Endothelial cell of umbilical vein (primary cell): ENCODE measurements at regions of chr2 and their contacts with region 1.

Region 1: GRCh38 chr2:65040400-65041261 is 15.6 kb upstream of the CEP68 start:
- DNase-seq: peak; percentile 83
- H3K4me3 ChIP-seq: no peak overlapping the region
- H3K27ac ChIP-seq: no peak overlapping the region
- H3K4me1 ChIP-seq: peaks cover 11% of the 10 kb centered on the region
- H3K27me3 ChIP-seq: no peaks in the 10 kb centered on the region
- CTCF ChIP-seq: peak; percentile 82 to 91
- POLR2A ChIP-seq: no peak

Region 2: DNA sequence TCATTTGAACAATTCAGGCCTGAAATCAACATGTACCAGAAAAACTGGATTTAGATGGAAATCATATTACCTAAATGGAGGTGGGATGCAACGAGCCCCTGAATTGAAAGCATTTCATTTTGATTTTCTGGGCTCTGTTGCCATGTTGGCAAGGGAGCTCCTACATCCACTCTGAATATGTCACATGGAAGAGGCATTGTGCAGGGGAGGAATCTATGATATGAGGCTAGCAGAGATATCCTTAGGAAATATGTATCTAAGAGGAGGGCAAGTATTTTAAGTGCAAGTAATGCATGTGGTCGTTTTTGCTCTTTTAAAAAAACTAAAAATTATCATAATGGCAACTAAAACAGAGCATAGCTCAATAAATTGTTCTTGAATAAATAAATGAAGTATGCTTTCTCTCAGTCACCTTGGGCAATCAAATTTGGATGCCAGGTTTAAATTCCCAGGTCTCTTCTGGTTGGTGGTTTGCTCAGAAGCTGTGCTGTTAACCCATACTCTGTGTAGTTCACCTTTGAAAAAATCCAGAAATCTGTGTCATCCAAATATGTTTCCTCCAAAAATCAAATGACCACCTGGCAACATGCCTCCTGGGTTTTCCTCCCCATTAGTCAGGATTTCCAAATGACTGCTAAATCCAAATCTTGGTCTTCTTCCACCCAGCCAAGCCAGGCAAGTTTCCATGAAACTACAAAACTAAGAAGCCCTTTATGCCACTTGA is 593.2 kb before region 1 on chr2:
- CTCF ChIA-PET with region 1: no interaction called
- POLR2A ChIA-PET with region 1: no interaction called
- dilution Hi-C with region 1: no loop called
- intact Hi-C with region 1: no loop called
- DNase-seq: no peak
- H3K4me3 ChIP-seq: no peak overlapping the region
- H3K27ac ChIP-seq: no peak overlapping the region
- H3K4me1 ChIP-seq: no peaks in the 10 kb centered on the region
- H3K27me3 ChIP-seq: peaks cover 9 to 18% of the 10 kb centered on the region in 2 experiments
- CTCF ChIP-seq: no peak
- POLR2A ChIP-seq: no peak

Region 3: GRCh38 chr2:64978514-64979268 is 61.9 kb before region 1 on chr2:
- CTCF ChIA-PET with region 1: interaction called, 9 read pairs
- POLR2A ChIA-PET with region 1: no interaction called
- dilution Hi-C with region 1: no loop called
- intact Hi-C with region 1: loop called (anchors 1 kb)
- DNase-seq: peak; percentile 30
- H3K4me3 ChIP-seq: no peak overlapping the region
- H3K27ac ChIP-seq: no peak overlapping the region
- H3K4me1 ChIP-seq: peaks cover 7% of the 10 kb centered on the region
- H3K27me3 ChIP-seq: peaks cover 0 to 2% of the 10 kb centered on the region in 2 experiments
- CTCF ChIP-seq: peak in 1 of 2 donors; percentile 22
- POLR2A ChIP-seq: no peak

Region 4: GRCh38 chr2:64988420-64989125 is 52.1 kb before region 1 on chr2:
- CTCF ChIA-PET with region 1: interaction called, 5 read pairs
- POLR2A ChIA-PET with region 1: no interaction called
- dilution Hi-C with region 1: no loop called
- intact Hi-C with region 1: loop called (anchors 1 kb)
- DNase-seq: peak; percentile 79
- H3K4me3 ChIP-seq: peak overlapping the region; percentile 54 to 69 (median 67)
- H3K27ac ChIP-seq: peak overlapping the region; percentile 94
- H3K4me1 ChIP-seq: peaks cover 15% of the 10 kb centered on the region
- H3K27me3 ChIP-seq: peaks cover 0 to 4% of the 10 kb centered on the region in 2 experiments
- CTCF ChIP-seq: peak in 1 of 2 donors; percentile 51
- POLR2A ChIP-seq: peak; percentile 73

Region 5: DNA sequence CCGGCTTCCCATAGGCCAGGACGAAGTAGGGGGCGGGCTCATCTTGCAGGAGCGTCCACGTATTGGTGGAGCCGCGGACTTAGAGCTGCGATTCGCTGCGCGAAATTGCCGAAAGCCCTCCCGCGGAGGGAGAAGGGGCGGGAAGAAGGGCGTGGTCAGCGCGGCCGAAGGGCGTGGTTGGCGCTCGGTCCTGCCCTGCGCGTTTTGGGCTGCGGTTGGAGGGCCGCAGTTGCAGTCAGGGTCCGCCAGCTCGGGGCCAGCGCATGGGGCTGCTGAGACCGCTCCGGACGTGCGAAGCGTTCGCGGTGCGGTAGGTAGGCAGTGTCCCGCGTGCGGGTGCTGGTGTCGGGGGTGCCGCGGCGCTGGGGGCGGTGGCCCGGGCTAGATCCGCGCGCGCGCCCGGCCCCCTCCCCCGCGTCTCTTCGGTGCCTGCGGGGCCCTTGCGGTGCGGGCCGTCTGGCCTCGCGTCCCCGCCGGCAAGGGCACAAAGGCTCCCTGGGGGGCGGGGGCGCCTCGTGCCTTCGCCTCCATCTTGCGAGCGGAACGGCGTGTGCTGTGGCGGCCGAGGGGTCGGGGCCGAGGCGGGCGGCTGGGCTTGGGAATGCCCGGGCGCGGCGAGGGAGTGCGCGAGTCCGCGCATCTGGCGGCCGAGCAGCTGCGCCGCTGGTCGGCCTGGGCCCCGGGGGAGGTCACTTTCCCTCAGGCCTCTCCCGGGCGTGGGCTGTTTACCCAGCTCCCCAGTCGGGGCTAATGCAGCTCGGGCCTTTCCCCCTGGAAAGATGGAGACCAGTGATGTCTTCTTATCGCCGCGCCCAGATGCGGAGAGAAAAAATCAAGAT is 15.8 kb after region 1 on chr2 and contains the start of gene CEP68:
- CTCF ChIA-PET with region 1: interaction called, 12 read pairs
- POLR2A ChIA-PET with region 1: interaction called, 9 read pairs
- dilution Hi-C with region 1: no loop called
- intact Hi-C with region 1: loop called (anchors 1 kb)
- DNase-seq: peak; percentile 99
- H3K4me3 ChIP-seq: peak within 1 kb of the TSS; percentile 74 to 96 (median 78)
- H3K27ac ChIP-seq: peak within 1 kb of the TSS; percentile 81
- H3K4me1 ChIP-seq: peaks cover 33% of the 10 kb centered on the region
- H3K27me3 ChIP-seq: no peaks in the 10 kb centered on the region
- CTCF ChIP-seq: no peak
- POLR2A ChIP-seq: peak; percentile 95
- total RNA-seq, gene CEP68: 20.0 and 21.4 TPM in 2 replicates

Region 6: GRCh38 chr2:65169760-65170136 is 129.1 kb after region 1 on chr2:
- CTCF ChIA-PET with region 1: interaction called, 13 read pairs
- POLR2A ChIA-PET with region 1: no interaction called
- dilution Hi-C with region 1: no loop called
- intact Hi-C with region 1: no loop called
- DNase-seq: no peak
- H3K4me3 ChIP-seq: no peak overlapping the region
- H3K27ac ChIP-seq: no peak overlapping the region
- H3K4me1 ChIP-seq: no peaks in the 10 kb centered on the region
- H3K27me3 ChIP-seq: peaks cover 0 to 4% of the 10 kb centered on the region in 2 experiments
- CTCF ChIP-seq: no peak
- POLR2A ChIP-seq: no peak